ENCODE measurements at regions of chr1 and their contacts with region 1.

Region 1: DNA sequence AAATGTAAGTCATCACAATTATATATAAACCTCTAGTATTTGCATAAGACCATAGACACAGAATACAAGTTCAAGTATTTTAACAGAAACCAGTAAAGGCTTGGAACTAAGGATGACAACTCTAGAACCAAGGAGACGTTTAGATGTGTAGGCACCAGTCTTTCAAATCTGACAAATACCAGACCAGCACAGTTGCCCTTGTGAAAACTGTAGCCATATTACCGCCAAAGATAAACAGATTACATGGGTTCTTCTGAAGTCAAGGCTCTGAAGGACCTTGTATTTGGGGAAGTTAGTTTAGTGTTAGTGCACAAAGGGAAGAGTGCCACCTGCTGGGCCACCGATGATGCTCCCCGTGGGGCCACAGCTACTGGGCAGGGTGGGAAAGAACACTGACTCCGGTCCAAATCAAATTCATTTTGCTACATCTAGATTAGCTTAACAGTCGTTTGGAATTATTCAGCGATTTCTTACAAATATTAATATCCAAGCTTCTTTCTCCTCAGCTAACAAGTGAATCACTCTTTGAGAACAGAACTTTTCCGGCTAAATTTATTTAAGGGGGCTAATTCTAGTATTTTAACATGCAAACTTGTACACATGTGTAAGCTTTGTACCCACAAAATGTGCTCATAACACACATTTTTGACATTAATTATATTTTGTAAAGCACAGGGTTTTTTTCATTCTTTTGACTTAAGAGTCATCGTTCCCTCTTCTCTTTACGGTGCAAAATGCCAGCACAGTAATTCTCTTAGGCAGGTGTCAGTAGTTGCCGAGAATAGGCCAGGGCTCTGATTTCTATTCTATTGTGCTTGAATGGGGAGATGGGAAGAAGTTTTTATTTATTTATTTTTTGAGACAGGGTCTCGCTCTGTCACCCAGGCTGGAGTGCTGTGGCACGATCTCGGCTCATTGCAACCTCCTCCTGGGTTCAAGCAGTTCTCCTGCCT is 8.0 kb upstream of the NIBAN1 start:
- DNase-seq: no peak
- H3K4me3 ChIP-seq: no peak overlapping the region
- H3K27ac ChIP-seq: no peak overlapping the region
- H3K4me1 ChIP-seq: no peaks in the 10 kb centered on the region
- H3K27me3 ChIP-seq: no peaks in the 10 kb centered on the region
- CTCF ChIP-seq: peak; percentile 51 to 88 (median 68)
- POLR2A ChIP-seq: no peak

Region 2: DNA sequence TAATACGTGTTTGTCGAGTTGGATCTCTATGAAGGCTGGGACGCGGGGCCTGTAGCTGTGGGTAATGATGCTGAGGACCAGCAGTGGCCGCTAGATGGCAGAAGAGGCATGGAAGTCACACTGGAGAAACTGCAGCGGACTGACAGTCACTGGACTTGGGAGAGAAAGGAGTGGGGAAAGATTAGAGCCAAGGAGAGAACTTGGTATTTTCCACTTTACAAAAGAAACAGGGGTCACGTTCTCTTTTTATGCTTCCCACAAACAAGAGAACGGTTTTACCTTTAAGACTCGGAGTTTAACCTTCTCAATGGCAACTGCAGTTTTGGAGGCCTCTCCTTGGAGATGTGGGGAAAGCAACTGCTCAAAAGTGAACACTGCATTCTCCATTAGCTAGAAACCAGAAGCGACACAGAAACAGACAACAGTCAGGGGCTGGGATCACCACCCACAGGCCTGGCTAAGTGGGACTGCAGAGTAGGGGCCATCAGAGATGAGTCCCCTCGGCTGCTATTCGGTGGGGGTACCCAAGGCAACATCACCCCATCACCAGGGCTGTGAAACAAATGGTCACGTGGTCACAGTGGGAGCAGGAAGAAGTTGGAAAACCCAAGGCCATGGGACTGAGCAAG is 176.5 kb before region 1 on chr1:
- intact Hi-C with region 1: loop called (anchors 2 kb)
- DNase-seq: no peak
- H3K4me3 ChIP-seq: no peak overlapping the region
- H3K27ac ChIP-seq: no peak overlapping the region
- H3K4me1 ChIP-seq: peaks cover 19% of the 10 kb centered on the region
- H3K27me3 ChIP-seq: no peaks in the 10 kb centered on the region
- CTCF ChIP-seq: peak; percentile 80 to 95 (median 92)
- POLR2A ChIP-seq: no peak

Measured in vagina (tissue), 2 donors.